CD8-positive, alpha-beta T cell (primary cell): ENCODE measurements at regions of chr5 and their contacts with region 1.

Region 1: DNA sequence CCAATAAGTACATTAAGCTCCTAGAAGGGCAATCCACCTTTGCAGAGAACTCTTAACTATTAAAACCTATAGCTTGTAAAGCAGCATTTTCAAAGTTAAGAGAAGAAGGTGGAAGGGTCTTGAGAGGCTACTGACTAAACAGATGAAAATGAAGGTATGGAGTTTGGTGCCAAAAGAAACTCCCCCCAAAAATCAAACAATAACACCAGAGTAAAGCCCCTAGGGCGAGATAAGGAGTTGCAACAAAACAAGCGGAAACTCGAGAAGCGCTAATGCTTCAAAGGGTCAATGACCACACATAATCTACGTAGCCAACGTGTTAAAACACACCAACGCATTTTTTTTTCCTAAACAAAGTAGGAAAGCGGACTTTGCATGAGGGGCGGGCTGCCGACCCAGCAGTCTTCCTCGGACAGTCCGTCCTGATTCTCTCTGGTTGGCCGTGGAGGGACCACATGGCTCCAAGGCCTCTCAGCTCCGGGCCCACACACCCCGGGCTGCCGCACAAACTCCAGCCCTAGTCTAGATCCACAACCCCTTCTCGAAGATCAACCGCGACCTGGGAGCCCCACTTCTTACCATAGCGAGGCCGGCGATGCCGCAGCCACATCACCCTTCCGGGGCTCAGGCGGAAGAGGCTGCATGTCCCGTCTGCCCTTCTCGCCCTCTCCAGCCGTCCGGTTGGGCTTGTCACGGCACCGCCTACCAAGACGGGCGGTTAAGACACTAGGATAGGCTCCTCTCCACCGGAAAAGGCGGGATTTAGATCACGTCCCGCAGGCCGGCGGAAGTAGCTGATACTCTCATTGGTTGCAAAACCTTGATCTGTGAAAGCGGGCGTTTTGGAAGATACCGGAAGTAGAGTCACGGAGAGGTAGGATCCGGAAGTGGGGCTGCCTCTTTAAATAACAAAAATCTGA is at the starts of genes TMEM167A and XRCC4:
- DNase-seq: peak; percentile 84 to 98 (median 92)
- ATAC-seq: peak; percentile 98
- H3K4me3 ChIP-seq: peak within 1 kb of the TSS; percentile 81 to 93
- H3K4me3 Mint-ChIP-seq: peak within 1 kb of the TSS; percentile 99
- H3K27ac ChIP-seq: peak within 1 kb of the TSS; percentile 77 to 96
- H3K27ac Mint-ChIP-seq: peak within 1 kb of the TSS; percentile 99
- H3K4me1 ChIP-seq: peaks cover 28% of the 10 kb centered on the region
- H3K4me1 Mint-ChIP-seq: peaks cover 59% of the 10 kb centered on the region
- H3K27me3 ChIP-seq: no peaks in the 10 kb centered on the region
- H3K27me3 Mint-ChIP-seq: no peaks in the 10 kb centered on the region
- CTCF ChIP-seq: no peak
- total RNA-seq, gene TMEM167A: 51.6 to 59.0 TPM
- total RNA-seq, gene XRCC4: 1.1 to 1.3 TPM

Region 2: DNA sequence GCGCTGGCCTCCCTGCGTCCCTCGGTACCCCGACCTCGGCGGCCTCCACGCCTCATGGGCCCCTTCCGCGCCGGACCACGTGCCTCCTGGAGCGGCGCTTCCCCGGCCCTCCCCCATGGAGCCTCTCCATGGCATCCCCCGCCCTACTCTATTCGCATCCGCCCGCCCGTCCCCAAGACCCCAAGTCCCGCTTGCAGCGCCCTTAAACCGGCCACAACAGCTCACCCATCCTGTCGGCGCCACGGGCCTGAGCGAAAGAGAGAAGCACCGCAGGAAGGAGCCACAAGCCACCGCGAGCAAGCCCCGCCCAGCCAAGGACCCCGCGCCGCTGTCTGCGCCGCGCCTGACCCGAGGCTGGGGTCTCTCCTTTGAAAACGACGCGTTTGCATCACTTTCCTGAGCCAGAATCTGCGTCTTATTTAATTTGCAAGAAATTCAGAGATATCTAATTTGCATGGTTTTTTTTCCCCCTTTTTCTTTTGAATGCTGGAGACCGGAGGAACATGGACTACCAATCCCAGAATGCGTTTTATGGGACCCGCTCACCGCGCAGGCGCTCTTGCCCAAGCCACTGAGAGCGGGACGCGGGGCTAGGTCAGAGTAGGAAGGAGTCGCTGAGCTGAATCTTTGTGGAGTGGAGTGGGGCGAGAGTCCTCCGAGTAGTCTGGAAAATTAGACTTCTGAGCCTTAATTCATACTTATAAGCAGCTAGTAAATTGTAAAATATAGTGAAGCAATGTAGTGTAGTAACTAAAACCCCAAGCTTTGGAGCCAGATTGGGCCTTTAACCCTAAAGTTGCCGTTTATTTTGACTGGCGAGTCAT is 798.7 kb before region 1 on chr5 and contains the start of gene RPS23:
- CTCF ChIA-PET with region 1: no interaction called
- POLR2A ChIA-PET with region 1: interaction called, 5 read pairs
- intact Hi-C with region 1: loop called (anchors 1 to 5 kb)
- DNase-seq: peak; percentile 73 to 94 (median 86)
- ATAC-seq: peak; percentile 95
- H3K4me3 ChIP-seq: peak within 1 kb of the TSS; percentile 63 to 94
- H3K4me3 Mint-ChIP-seq: peak within 1 kb of the TSS; percentile 97
- H3K27ac ChIP-seq: peak within 1 kb of the TSS; percentile 71 to 84
- H3K27ac Mint-ChIP-seq: peak within 1 kb of the TSS; percentile 96
- H3K4me1 ChIP-seq: peaks cover 18% of the 10 kb centered on the region
- H3K4me1 Mint-ChIP-seq: peaks cover 44% of the 10 kb centered on the region
- H3K27me3 ChIP-seq: no peaks in the 10 kb centered on the region
- H3K27me3 Mint-ChIP-seq: no peaks in the 10 kb centered on the region
- CTCF ChIP-seq: no peak
- total RNA-seq, gene RPS23: 3,866 to 4,021 TPM

Region 3: GRCh38 chr5:82283893-82284292 is 793.1 kb before region 1 on chr5:
- CTCF ChIA-PET with region 1: no interaction called
- POLR2A ChIA-PET with region 1: interaction called, 5 read pairs
- intact Hi-C with region 1: loop called in 1 of 2 experiments (anchors 5 kb)
- DNase-seq: no peak
- ATAC-seq: no peak
- H3K4me3 ChIP-seq: no peak overlapping the region
- H3K4me3 Mint-ChIP-seq: no peak overlapping the region
- H3K27ac ChIP-seq: no peak overlapping the region
- H3K27ac Mint-ChIP-seq: no peak overlapping the region
- H3K4me1 ChIP-seq: peaks cover 3% of the 10 kb centered on the region
- H3K4me1 Mint-ChIP-seq: peaks cover 5% of the 10 kb centered on the region
- H3K27me3 ChIP-seq: no peaks in the 10 kb centered on the region
- H3K27me3 Mint-ChIP-seq: no peaks in the 10 kb centered on the region
- CTCF ChIP-seq: no peak

Region 4: GRCh38 chr5:82356808-82357671 is 720.0 kb before region 1 on chr5:
- CTCF ChIA-PET with region 1: no interaction called
- POLR2A ChIA-PET with region 1: no interaction called
- intact Hi-C with region 1: loop called (anchors 1 to 10 kb)
- DNase-seq: peak; percentile 44 to 90 (median 74)
- ATAC-seq: peak; percentile 83
- H3K4me3 ChIP-seq: peak overlapping the region in 1 of 2 experiments; percentile 9
- H3K4me3 Mint-ChIP-seq: peak overlapping the region; percentile 77
- H3K27ac ChIP-seq: peak overlapping the region; percentile 29 to 53
- H3K27ac Mint-ChIP-seq: peak overlapping the region; percentile 97
- H3K4me1 ChIP-seq: peaks cover 13% of the 10 kb centered on the region
- H3K4me1 Mint-ChIP-seq: peaks cover 24% of the 10 kb centered on the region
- H3K27me3 ChIP-seq: no peaks in the 10 kb centered on the region
- H3K27me3 Mint-ChIP-seq: no peaks in the 10 kb centered on the region
- CTCF ChIP-seq: no peak

Region 5: GRCh38 chr5:82522897-82523296 is 554.1 kb before region 1 on chr5:
- CTCF ChIA-PET with region 1: no interaction called
- POLR2A ChIA-PET with region 1: no interaction called
- intact Hi-C with region 1: no loop called
- DNase-seq: no peak
- ATAC-seq: no peak
- H3K4me3 ChIP-seq: no peak overlapping the region
- H3K4me3 Mint-ChIP-seq: no peak overlapping the region
- H3K27ac ChIP-seq: no peak overlapping the region
- H3K27ac Mint-ChIP-seq: no peak overlapping the region
- H3K4me1 ChIP-seq: no peaks in the 10 kb centered on the region
- H3K4me1 Mint-ChIP-seq: no peaks in the 10 kb centered on the region
- H3K27me3 ChIP-seq: no peaks in the 10 kb centered on the region
- H3K27me3 Mint-ChIP-seq: no peaks in the 10 kb centered on the region
- CTCF ChIP-seq: no peak

Region 6: GRCh38 chr5:82549263-82549662 is 527.7 kb before region 1 on chr5:
- CTCF ChIA-PET with region 1: no interaction called
- POLR2A ChIA-PET with region 1: no interaction called
- intact Hi-C with region 1: no loop called
- DNase-seq: no peak
- ATAC-seq: no peak
- H3K4me3 ChIP-seq: no peak overlapping the region
- H3K4me3 Mint-ChIP-seq: no peak overlapping the region
- H3K27ac ChIP-seq: no peak overlapping the region
- H3K27ac Mint-ChIP-seq: no peak overlapping the region
- H3K4me1 ChIP-seq: no peaks in the 10 kb centered on the region
- H3K4me1 Mint-ChIP-seq: no peaks in the 10 kb centered on the region
- H3K27me3 ChIP-seq: no peaks in the 10 kb centered on the region
- H3K27me3 Mint-ChIP-seq: no peaks in the 10 kb centered on the region
- CTCF ChIP-seq: no peak